ENCODE measurements at regions of chr20 and their contacts with region 1.

Region 1: DNA sequence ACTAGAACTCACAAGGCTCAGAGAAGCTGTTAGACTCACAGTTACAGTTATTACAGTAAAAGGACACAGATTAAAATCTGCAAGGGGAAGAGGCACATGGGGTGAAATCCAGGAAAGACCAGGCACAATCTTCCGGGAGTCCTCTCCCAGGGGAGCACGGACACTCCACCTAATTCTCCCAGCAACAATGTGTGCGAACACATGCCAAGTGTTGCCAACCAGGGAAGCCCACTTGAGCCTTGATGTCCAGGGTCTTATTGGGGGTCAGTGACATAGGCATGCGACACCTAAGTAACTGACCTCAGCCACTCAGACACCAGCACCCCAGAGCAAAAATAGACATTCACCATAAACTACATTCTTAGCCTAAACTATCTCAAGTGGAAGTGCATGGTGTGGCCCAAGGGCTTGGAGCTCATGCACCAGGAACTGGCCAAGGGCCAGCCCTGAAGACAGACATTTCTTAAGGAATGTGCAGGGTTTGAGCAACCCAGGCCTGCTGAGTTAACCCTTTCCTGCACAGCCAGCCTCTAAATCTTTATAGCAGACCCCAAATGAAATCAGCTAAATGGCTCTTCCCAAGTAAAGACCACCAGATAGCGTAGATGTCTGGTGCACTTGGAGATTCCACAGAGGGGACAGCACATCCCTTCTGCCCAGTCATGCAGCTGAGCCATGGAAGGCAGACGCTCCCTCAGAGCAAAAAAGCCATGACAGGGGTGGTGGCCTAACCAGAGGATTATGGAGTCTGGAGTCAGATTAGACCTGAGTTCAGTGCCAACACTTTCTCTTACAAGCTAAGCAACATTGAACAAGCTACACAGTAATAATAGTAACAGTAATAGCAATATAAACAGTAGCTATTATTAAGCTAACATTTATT is 222.7 kb downstream of the ZMYND8 start:
- DNase-seq: no peak
- H3K4me3 ChIP-seq: no peak overlapping the region
- H3K27me3 ChIP-seq: no peaks in the 10 kb centered on the region
- CTCF ChIP-seq: no peak

Region 2: GRCh38 chr20:46928580-46929132 is 205.2 kb before region 1 on chr20:
- CTCF ChIA-PET with region 1: no interaction called
- POLR2A ChIA-PET with region 1: no interaction called
- DNase-seq: no peak
- H3K4me3 ChIP-seq: no peak overlapping the region
- H3K27me3 ChIP-seq: peaks cover 4% of the 10 kb centered on the region
- CTCF ChIP-seq: no peak

Region 3: DNA sequence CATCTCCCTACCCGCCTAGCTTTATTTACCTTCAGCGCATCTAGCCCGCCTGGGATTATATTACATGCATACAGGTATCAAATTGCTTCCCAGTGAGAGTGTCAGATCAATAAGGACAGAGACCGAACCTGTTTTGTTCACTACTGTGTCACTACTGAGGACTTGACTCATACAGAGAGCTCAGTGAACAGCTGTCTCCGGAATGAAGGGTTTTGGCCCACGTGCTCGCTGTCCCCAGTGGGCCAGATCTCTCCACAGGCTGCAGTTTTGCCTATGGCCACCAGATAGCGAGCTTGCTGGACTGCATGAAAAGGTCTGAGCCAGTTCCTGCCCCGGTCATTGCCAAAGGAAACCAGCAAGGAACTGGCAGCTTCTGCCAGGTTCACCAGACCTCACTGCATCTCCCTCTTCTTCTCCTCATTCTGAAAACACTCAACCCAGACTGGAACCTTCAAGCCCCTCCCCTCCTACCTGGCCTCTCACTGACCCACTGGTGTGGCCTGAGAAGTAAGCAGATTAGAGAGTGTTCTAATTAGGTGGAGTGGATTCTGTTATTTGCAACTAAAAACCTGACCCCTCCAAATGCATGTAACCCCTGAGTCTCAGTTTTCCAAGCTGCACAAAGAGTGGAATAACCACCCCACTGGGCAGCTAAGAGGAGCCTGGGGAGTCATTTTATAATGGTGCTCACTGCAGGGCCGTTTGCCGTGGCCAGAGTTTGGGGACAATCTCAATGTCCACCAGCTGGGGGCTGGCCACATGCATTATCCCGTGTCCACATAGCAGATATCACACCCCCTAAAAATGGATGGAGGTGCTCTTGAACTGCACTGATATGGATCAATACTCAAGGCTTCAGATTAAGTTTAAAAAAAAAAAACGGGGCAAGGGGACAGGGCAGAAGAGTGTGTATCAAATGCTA is 72.0 kb after region 1 on chr20:
- CTCF ChIA-PET with region 1: no interaction called
- POLR2A ChIA-PET with region 1: no interaction called
- DNase-seq: no peak
- H3K4me3 ChIP-seq: no peak overlapping the region
- H3K27me3 ChIP-seq: no peaks in the 10 kb centered on the region
- CTCF ChIP-seq: peak; percentile 92

Region 4: GRCh38 chr20:48288381-48289218 is 1154.8 kb after region 1 on chr20:
- CTCF ChIA-PET with region 1: no interaction called
- POLR2A ChIA-PET with region 1: interaction called, 18 read pairs
- DNase-seq: no peak
- H3K4me3 ChIP-seq: no peak overlapping the region
- H3K27me3 ChIP-seq: no peaks in the 10 kb centered on the region
- CTCF ChIP-seq: no peak